CD4-positive, alpha-beta T cell (primary cell): ENCODE measurements at regions of chr13 and their contacts with region 1.

Region 1: DNA sequence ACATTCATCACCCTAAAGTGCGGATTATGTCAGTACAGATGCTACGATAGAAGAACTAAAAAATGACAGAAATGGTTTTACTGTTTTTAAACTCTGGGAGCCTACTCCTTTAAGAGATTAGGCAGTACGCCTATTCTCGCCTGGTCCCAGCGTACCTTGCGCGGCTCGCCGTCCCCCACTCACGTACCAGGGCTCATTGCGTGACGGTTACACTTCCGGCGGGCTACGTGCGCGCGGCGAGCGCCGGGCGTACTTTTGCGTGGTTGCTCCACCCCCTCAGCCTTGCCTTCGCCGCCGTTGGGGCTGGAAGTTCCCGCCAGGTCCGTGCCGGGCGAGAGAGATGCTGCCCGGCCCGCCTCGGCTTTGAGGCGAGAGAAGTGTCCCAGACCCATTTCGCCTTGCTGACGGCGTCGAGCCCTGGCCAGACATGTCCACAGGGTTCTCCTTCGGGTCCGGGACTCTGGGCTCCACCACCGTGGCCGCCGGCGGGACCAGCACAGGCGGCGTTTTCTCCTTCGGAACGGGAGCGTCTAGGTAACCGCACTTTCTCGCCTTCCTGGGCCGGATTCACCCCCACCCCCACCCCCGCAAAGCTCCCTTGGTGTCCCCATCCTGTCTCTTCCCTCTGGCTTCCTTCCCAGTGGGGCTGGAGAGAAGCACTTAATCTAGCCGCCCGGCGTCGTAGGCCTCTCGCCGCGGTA is at the start of gene NUP58:
- DNase-seq: peak; percentile 87 to 98 (median 90)
- ATAC-seq: peak; percentile 97
- H3K4me3 ChIP-seq: peak within 1 kb of the TSS; percentile 80
- H3K4me3 Mint-ChIP-seq: peak within 1 kb of the TSS; percentile 99
- H3K27ac ChIP-seq: peak within 1 kb of the TSS; percentile 92 to 94
- H3K27ac Mint-ChIP-seq: peak within 1 kb of the TSS; percentile 95
- H3K4me1 ChIP-seq: peaks cover 26% of the 10 kb centered on the region
- H3K4me1 Mint-ChIP-seq: peaks cover 49% of the 10 kb centered on the region
- H3K27me3 ChIP-seq: peaks cover 0 to 4% of the 10 kb centered on the region in 2 experiments
- H3K27me3 Mint-ChIP-seq: peaks cover 14% of the 10 kb centered on the region
- CTCF ChIP-seq: no peak
- total RNA-seq, gene NUP58: 56.5 to 60.9 TPM

Region 2: DNA sequence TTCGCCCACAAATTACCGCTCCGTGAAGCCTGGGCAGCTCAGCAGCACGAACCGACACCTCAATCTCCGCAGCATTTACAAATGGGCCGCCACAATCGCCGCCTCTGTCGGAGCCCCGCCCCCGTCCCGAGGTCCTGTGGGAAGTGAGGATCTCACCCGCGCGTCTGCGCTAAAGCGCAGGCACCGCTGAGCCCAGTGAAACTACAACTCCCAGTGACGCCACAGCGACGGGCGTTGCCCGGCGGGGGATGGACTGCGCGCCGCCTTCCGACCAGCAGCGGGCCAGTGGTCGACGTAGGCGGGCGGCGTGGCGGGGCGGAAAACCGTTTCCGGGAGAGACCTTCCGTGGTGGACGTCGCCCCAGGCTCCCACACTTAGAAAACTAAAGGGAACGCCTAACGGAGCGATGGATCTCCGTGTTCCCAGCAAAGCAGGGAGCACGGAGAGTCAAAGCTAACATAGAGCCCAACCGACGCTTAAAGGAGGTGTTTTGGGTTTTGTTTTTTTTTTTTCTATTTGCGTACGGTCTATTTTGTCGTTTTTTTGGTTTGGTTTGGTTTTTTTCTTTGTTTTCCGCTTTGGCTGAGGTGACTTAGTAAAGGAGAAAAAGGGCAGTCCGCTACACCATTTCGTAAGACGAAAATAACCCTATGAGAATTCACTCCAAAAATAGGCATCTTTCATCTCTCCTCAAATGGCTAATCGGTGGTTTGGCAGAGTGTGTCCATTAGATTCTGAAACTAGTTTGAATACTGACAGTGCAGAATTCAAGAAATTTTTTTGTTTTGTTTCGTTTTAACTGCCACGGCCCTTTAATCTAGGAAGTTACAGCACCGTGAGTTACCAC is 378.5 kb before region 1 on chr13:
- CTCF ChIA-PET with region 1: no interaction called
- POLR2A ChIA-PET with region 1: no interaction called
- intact Hi-C with region 1: loop called in 1 of 2 experiments (anchors 5 kb)
- DNase-seq: peak; percentile 84 to 97 (median 90)
- ATAC-seq: peak; percentile 98
- H3K4me3 ChIP-seq: peak overlapping the region; percentile 91
- H3K4me3 Mint-ChIP-seq: peak overlapping the region; percentile 91
- H3K27ac ChIP-seq: peak overlapping the region; percentile 70 to 93
- H3K27ac Mint-ChIP-seq: peak overlapping the region; percentile 90
- H3K4me1 ChIP-seq: peaks cover 5% of the 10 kb centered on the region
- H3K4me1 Mint-ChIP-seq: peaks cover 18% of the 10 kb centered on the region
- H3K27me3 ChIP-seq: peaks cover 0 to under 1% of the 10 kb centered on the region in 2 experiments
- H3K27me3 Mint-ChIP-seq: no peaks in the 10 kb centered on the region
- CTCF ChIP-seq: no peak

Region 3: DNA sequence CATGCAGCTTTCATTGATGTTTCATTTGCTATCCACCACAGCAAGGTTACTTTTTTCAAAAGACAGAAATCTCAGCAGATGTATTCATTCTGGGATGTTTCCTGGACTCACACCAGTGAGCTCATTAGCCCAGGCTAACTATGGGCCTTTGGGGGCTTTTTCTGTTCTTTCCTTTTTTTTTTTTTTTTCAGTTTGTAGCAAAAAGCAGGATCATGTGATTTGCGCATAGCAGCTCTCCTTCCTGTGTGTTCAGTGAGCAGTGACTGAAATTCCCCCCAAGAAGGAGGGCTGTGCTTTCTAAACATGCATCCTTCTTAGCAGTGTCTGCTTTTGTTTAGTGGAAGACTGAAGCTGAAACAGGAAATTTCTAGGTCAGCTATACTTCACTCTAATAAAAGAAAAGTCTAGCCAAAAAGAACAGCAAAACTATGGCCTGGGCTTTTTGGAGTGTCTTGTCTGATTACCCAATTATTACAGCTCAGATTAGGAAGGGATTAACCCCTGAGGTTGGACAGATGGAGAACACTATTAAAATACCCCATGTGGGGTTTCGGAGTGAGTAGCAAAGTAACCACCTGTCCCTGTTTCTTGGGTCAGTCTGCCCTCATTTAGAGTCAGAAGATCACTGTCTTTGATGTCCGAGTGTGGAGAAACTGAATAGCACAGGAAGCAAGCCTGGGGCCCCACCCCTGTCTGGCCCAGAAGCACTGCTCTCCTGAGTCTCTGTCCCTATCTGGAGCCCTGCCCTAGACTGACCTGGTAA is 120.5 kb before region 1 on chr13:
- CTCF ChIA-PET with region 1: no interaction called
- POLR2A ChIA-PET with region 1: no interaction called
- intact Hi-C with region 1: no loop called
- DNase-seq: no peak
- ATAC-seq: no peak
- H3K4me3 ChIP-seq: no peak overlapping the region
- H3K4me3 Mint-ChIP-seq: no peak overlapping the region
- H3K27ac ChIP-seq: no peak overlapping the region
- H3K27ac Mint-ChIP-seq: no peak overlapping the region
- H3K4me1 ChIP-seq: no peaks in the 10 kb centered on the region
- H3K4me1 Mint-ChIP-seq: no peaks in the 10 kb centered on the region
- H3K27me3 ChIP-seq: peaks cover 32 to 36% of the 10 kb centered on the region in 2 experiments
- H3K27me3 Mint-ChIP-seq: peaks cover 91% of the 10 kb centered on the region
- CTCF ChIP-seq: no peak

Region 4: GRCh38 chr13:25267715-25268114 is 33.8 kb before region 1 on chr13:
- CTCF ChIA-PET with region 1: no interaction called
- POLR2A ChIA-PET with region 1: no interaction called
- intact Hi-C with region 1: loop called in 1 of 2 experiments (anchors 5 kb)
- DNase-seq: peak in 3 of 14 experiments; percentile 32 to 51 (median 46)
- ATAC-seq: peak; percentile 84
- H3K4me3 ChIP-seq: no peak overlapping the region
- H3K4me3 Mint-ChIP-seq: no peak overlapping the region
- H3K27ac ChIP-seq: no peak overlapping the region
- H3K27ac Mint-ChIP-seq: peak overlapping the region; percentile 13
- H3K4me1 ChIP-seq: peaks cover 2% of the 10 kb centered on the region
- H3K4me1 Mint-ChIP-seq: peaks cover 22% of the 10 kb centered on the region
- H3K27me3 ChIP-seq: no peaks in the 10 kb centered on the region
- H3K27me3 Mint-ChIP-seq: no peaks in the 10 kb centered on the region
- CTCF ChIP-seq: peak; percentile 19

Region 5: DNA sequence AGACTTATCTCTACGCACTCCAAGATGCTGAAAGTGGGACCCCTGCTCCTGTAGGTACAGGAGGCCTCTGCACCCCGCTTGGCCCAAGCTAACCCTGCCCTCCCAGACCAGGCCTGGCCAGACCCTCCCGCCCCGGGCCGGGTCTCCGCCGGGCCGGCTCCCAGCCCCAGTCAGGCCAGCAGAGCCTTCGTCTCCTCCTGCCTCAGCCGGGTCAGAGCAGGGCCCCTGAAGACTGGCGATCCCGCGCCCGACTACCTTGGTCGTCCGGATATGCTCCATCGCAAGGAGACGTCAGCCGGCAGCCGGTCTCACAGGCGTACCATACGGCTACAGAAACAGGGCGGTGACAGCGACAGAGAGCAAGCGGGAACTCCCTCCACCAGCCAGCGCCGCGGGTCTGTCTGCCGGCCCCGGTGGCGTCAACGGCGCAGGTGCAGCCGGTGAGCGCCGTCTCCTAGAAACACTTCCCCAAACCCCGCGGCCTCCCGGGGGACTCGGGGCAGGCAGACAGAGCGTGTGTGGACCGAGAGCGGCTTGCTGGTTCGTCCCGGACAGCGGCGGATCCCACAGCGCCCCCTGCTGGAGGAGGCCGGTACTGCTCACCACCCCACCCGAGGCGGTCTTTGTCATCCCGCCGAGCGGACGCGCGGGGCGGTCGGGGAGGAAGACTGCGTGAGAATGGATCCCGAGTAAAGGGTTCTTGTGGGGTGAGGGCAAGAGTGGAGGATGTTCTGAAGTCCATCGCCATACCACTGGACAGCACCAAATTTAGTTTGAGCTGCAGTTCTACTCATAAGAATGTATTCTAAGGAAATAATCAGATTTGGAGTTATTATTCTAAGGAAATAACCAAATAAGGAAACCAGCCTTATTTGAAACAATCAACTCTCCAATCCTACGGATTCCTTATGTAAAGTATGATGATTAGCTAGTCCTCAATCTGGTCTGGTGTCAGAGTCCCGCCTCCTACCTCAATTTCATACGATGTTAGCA is 14.2 kb before region 1 on chr13 and contains the start of gene MTMR6:
- CTCF ChIA-PET with region 1: interaction called, 12 read pairs
- POLR2A ChIA-PET with region 1: interaction called, 13 read pairs
- intact Hi-C with region 1: loop called (anchors 1 kb)
- DNase-seq: peak; percentile 89 to 98 (median 93)
- ATAC-seq: peak; percentile 84
- H3K4me3 ChIP-seq: peak within 1 kb of the TSS; percentile 94
- H3K4me3 Mint-ChIP-seq: peak within 1 kb of the TSS; percentile 99
- H3K27ac ChIP-seq: peak within 1 kb of the TSS; percentile 97 to 99
- H3K27ac Mint-ChIP-seq: peak within 1 kb of the TSS; percentile 97
- H3K4me1 ChIP-seq: peaks cover 22% of the 10 kb centered on the region
- H3K4me1 Mint-ChIP-seq: peaks cover 40% of the 10 kb centered on the region
- H3K27me3 ChIP-seq: no peaks in the 10 kb centered on the region
- H3K27me3 Mint-ChIP-seq: peaks cover 4% of the 10 kb centered on the region
- CTCF ChIP-seq: peak; percentile 99
- total RNA-seq, gene MTMR6: 33.3 to 34.2 TPM